ENCODE measurements at regions of chr16 and their contacts with region 1.

Region 1: DNA sequence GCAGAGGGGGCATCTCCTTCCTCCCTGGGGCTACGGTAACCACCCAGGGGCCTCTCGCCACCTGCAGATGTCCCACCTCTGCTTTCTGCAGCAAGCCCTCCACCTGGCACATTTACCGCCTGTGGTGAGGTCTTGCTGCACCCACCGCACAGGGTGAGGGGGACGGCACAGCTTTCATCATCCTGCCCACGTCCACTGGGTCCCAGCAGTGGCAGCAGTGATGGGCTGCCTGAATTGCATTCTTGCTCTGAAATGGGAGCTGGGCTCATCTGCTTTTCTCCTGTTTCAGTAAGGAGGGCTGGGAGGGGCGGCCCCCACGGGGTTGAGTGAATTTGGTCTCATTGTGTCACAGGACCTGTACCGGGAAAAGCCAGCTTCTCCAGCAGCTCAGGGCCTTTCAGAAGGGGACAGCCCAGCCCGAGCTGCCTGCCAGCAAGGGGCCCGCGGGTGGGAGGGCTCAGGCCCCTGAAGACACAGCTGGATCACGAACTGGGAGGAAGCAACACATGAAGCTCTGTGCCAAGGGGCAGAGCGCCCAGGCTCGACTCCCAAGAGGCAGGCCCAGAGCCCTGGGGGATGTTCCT is 12.7 kb downstream of the DNAAF8 start:
- DNase-seq: no peak
- H3K4me3 ChIP-seq: no peak overlapping the region
- H3K27ac ChIP-seq: peak overlapping the region in 2 of 4 donors; percentile 16 to 18
- H3K4me1 ChIP-seq: peaks cover 6 to 19% (median 8%) of the 10 kb centered on the region in 4 donors
- H3K27me3 ChIP-seq: no peaks in the 10 kb centered on the region
- CTCF ChIP-seq: no peak
- EP300 ChIP-seq: no peak
- POLR2A ChIP-seq: no peak

Region 2: GRCh38 chr16:5041600-5042133 is 294.6 kb after region 1 on chr16:
- in situ Hi-C with region 1: no loop called
- intact Hi-C with region 1: loop called (anchors 5 kb)
- DNase-seq: no peak
- H3K4me3 ChIP-seq: no peak overlapping the region
- H3K27ac ChIP-seq: no peak overlapping the region
- H3K4me1 ChIP-seq: no peaks in the 10 kb centered on the region
- H3K27me3 ChIP-seq: no peaks in the 10 kb centered on the region
- CTCF ChIP-seq: no peak
- EP300 ChIP-seq: no peak
- POLR2A ChIP-seq: no peak

Measured in transverse colon (tissue), 4 donors.